HEK293 (cell line): ENCODE measurements at regions of chr18 and their contacts with region 1.

Region 1: DNA sequence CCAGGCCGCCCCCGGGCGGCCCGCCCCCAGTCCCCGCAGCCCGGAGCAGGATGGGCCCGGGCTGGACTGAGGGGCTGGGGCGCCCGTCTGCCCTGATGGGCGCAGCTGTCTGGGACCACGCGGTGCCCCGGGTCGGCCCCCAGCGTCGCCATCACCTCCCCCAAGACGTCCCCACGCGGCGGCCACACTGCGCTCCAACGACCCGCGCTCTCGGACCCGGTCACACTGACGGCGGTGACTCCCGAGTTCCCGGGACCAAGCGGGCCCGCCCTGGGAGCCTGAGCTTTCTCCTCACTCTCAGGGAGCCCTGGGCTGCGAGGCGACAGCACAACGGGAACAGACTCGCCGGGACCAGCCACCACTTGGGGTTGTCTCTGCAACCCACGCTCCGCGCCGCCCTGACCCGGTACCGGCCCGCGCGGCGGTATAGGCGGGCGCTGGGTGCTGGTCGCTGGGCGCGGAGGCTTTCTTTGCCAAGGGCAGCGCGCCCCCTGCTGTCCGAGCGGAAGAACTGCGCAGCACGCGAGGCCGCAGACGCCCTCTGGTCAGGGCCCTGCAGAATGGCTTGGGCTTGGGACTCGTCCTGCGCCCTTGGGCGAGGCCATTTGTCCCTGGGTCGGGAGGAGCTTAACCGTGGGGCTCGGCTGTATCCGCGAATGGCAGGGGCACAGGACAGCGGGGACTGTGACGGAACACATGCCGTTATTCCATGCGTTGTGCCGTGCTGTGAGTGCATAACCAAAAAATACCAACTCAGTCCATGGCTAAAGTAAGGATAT is 54.8 kb upstream of the ANKRD62 start:
- H3K4me3 ChIP-seq: peak overlapping the region; percentile 52
- H3K27ac ChIP-seq: no peak overlapping the region; the same call in 1 of the 2 replicates
- H3K4me1 ChIP-seq: no peaks in the 10 kb centered on the region; the same call in 1 of the 2 replicates
- CTCF ChIP-seq: peak; percentile 99

Region 2: GRCh38 chr18:12018861-12019260 is 20.0 kb before region 1 on chr18:
- CTCF ChIA-PET with region 1: interaction called, 10 read pairs
- POLR2A ChIA-PET with region 1: interaction called, 4 read pairs
- H3K4me3 ChIP-seq: no peak overlapping the region
- H3K27ac ChIP-seq: no peak overlapping the region
- H3K4me1 ChIP-seq: no peaks in the 10 kb centered on the region
- CTCF ChIP-seq: no peak

Region 3: GRCh38 chr18:12049978-12050811 is 11.4 kb after region 1 on chr18:
- CTCF ChIA-PET with region 1: interaction called, 32 read pairs
- POLR2A ChIA-PET with region 1: no interaction called
- H3K4me3 ChIP-seq: no peak overlapping the region
- H3K27ac ChIP-seq: no peak overlapping the region
- H3K4me1 ChIP-seq: no peaks in the 10 kb centered on the region
- CTCF ChIP-seq: no peak

Region 4: DNA sequence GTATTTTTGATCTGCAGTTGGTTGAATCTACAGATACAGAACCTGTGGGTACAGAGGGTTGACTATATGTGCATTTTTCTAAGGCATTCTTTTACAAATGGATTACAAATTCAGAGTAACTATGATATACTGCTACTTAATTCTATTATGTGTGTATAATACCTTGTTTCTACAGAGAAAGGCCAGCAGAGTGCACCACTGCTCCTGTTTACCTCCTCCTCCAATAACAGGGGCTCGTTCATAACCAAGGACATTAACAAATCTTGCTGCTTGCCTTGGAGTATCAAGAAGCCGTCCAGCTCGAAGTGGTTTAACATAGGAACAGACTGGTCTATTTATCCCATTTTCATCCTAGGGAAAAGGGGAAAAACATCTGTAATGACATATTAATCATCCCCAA is 647.3 kb after region 1 on chr18:
- CTCF ChIA-PET with region 1: no interaction called
- POLR2A ChIA-PET with region 1: no interaction called
- H3K4me3 ChIP-seq: no peak overlapping the region
- H3K27ac ChIP-seq: no peak overlapping the region
- H3K4me1 ChIP-seq: peaks cover 4% of the 10 kb centered on the region; the same call in 1 of the 2 replicates
- CTCF ChIP-seq: no peak

Region 5: GRCh38 chr18:12777500-12777944 is 738.7 kb after region 1 on chr18:
- CTCF ChIA-PET with region 1: no interaction called
- POLR2A ChIA-PET with region 1: no interaction called
- H3K4me3 ChIP-seq: no peak overlapping the region
- H3K27ac ChIP-seq: no peak overlapping the region
- H3K4me1 ChIP-seq: no peaks in the 10 kb centered on the region
- CTCF ChIP-seq: no peak